GM10248 (cell line): ENCODE measurements at regions of chr11 and their contacts with region 1.

Region 1: GRCh38 chr11:122655527-122656072 is at the start of gene UBASH3B:
- DNase-seq: peak; percentile 68
- CTCF ChIP-seq: peak; percentile 16

Region 2: DNA sequence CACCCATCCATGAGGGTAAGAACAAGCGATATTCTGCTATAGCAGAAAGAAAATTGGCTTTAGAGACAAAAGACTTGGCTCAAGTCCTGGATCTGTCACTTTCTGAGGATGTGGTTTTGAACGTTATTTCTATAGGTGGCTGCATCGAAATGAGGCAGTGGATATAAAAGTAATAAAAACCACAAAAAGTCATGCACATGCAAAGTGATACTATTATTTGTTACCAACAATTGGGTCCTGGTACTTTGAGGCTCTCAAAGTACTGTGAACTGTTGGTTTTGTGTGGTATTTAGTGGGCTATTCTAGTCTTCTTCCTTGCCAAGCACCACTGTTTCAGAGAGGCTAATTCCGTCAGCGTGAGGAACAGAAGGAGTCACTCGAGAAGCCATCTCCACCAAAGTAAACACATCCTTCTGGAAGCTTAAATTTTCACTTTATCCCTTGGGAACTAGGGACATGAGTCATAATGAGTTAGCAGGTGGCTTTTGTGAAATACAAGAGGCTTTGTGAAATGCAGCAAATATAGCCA is 13.0 kb after region 1 on chr11:
- CTCF ChIA-PET with region 1: interaction called, 10 read pairs
- POLR2A ChIA-PET with region 1: no interaction called
- DNase-seq: no peak
- CTCF ChIP-seq: no peak

Region 3: GRCh38 chr11:122697636-122698167 is 42.1 kb after region 1 on chr11:
- CTCF ChIA-PET with region 1: interaction called, 20 read pairs
- POLR2A ChIA-PET with region 1: no interaction called
- DNase-seq: peak; percentile 69
- CTCF ChIP-seq: no peak